ENCODE measurements at regions of chr2 and their contacts with region 1.

Region 1: GRCh38 chr2:33589444-33589843 is 9.7 kb downstream of the FAM98A start:
- DNase-seq: no peak
- H3K4me3 ChIP-seq: no peak overlapping the region
- H3K27ac ChIP-seq: peak overlapping the region; percentile 39 to 50
- H3K4me1 ChIP-seq: peaks cover 0 to 54% (median 15%) of the 10 kb centered on the region in 4 donors
- H3K27me3 ChIP-seq: no peaks in the 10 kb centered on the region
- CTCF ChIP-seq: no peak

Region 2: GRCh38 chr2:33475224-33476130 is 114.0 kb before region 1 on chr2:
- intact Hi-C with region 1: loop called (anchors 5 kb)
- DNase-seq: peak; percentile 57 to 82
- H3K4me3 ChIP-seq: peak overlapping the region; percentile 60 to 66
- H3K27ac ChIP-seq: peak overlapping the region; percentile 74 to 79
- H3K4me1 ChIP-seq: peaks cover 0 to 13% (median 3%) of the 10 kb centered on the region in 4 donors
- H3K27me3 ChIP-seq: no peaks in the 10 kb centered on the region
- CTCF ChIP-seq: peak; percentile 71 to 79

Region 3: GRCh38 chr2:33616873-33617272 is 27.4 kb after region 1 on chr2:
- intact Hi-C with region 1: no loop called
- DNase-seq: no peak
- H3K4me3 ChIP-seq: no peak overlapping the region
- H3K27ac ChIP-seq: no peak overlapping the region
- H3K4me1 ChIP-seq: no peaks in the 10 kb centered on the region
- H3K27me3 ChIP-seq: no peaks in the 10 kb centered on the region
- CTCF ChIP-seq: no peak

Measured in tibial artery (tissue), 4 donors.